GM18951 (cell line): ENCODE measurements at regions of chr1 and their contacts with region 1.

Region 1: DNA sequence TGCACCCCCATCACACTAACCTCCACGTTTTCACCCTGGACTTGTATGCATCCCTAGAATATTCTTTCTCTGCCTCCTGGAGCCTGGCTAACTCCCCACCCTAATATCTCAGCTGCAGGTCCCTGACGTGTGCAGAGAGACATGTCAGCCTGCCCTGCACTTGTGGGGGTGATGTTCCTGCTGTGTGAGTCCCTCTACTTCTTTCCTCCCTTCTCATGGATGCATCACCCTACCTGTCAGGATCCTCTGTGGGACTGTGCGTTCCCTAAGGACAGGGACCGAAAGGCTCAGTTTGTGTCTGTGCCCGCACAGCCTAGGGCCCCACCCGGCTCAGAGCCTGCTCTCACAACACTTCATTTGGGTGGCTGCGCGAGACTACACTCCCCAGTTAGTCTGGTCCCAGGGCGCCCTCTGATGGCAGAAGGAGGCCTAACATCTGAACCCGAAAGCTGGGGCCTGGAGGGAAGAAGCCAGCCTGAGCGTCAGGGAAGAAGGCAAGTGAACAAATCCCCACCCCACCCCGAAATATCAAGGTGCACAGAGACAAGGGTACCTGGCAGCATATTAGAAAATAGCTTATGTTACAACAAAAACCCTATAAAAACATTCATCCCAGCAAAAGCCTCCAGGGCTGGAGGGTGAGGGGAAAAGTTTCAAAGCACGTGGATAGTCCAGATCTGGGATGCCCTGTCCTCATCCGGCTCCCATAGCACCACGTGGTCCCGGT is 3.7 kb downstream of the CD52 start:
- POLR2A ChIP-seq: peak; percentile 18

Region 2: DNA sequence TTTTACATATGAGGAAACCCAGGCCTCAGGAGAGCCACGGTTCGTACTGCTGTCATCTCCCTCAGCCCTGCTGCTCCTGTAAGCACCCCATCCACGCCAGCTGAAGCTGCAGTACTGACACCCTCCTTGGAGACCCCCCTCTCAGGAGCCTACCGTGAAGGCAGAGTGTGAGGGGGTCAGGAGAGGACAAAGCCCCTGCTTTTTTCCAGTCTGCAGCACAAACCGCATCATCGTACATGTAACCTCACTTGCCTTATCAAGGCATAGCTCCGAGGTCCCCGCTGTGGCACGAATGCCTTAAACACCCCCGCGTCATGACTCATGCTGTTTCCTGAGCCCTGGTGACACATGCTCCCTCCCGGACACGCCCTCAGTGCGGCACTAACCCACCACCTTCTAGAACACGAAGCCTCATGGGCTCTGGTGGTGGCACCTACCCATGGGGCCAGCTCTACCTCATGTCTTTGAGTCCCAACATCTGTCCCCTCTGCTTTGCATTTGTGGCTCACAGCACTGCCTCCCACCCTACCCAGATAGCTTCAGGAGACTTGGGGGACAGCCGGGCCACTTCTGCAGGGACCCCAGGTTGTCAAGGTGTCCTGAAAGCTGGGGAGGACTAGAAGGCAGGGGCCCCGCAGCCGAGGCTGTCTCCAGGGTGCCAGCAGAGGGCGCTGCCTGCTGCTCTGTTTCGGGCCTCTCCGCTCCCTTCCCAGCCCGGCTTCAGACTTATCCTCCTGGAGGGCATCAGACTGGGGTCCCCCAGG is 36.7 kb before region 1 on chr1:
- in situ Hi-C with region 1: loop called (anchors 5 kb)
- POLR2A ChIP-seq: no peak